Heart left ventricle (tissue), 16 donors: ENCODE measurements at regions of chr9 and their contacts with region 1.

Region 1: DNA sequence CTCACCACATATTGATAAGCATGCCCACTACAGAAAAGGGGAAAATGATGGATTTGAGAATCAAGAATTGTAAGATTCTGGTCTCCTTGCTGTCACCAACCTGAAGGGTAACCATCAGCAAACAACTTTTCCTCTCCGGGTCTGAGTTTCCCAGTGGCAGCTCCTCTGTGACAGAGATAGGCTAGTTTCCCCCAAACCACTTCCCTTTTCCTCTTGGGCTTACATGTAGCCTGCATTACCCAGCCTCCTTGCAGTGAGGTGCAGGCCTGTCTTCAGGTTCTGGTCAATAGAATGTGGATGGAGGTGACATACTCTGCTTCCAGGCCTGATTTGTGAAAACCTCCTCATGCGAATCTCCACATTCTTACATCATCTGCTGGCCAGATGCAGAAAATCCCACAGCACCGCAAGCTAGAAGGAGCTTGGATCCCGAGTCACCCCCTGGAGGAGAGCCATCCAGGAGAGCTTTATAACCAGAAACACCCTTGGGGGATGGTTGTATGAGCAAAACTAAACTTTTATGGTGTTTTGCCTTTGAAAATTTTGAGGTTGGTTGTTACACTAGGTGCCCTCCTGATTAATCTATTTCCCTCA is 206.1 kb downstream of the RGS3 start:
- DNase-seq: no peak
- ATAC-seq: no peak
- H3K4me3 ChIP-seq: no peak overlapping the region
- H3K27ac ChIP-seq: no peak overlapping the region
- H3K4me1 ChIP-seq: peaks cover 0 to 6% (median 0%) of the 10 kb centered on the region in 12 donors
- H3K27me3 ChIP-seq: no peaks in the 10 kb centered on the region
- CTCF ChIP-seq: no peak
- POLR2A ChIP-seq: no peak

Region 2: GRCh38 chr9:113299800-113300292 is 369.8 kb before region 1 on chr9:
- intact Hi-C with region 1: loop called in 1 of 10 experiments (anchors 10 kb)
- DNase-seq: peak in 1 of 5 donors; percentile 17
- ATAC-seq: peak in 3 of 4 donors; percentile 25 to 38 (median 32)
- H3K4me3 ChIP-seq: no peak overlapping the region
- H3K27ac ChIP-seq: no peak overlapping the region
- H3K4me1 ChIP-seq: peaks cover 0 to 9% (median 0%) of the 10 kb centered on the region in 12 donors
- H3K27me3 ChIP-seq: no peaks in the 10 kb centered on the region
- CTCF ChIP-seq: no peak
- POLR2A ChIP-seq: no peak

Region 3: GRCh38 chr9:113317777-113318176 is 351.8 kb before region 1 on chr9:
- intact Hi-C with region 1: loop called in 1 of 10 experiments (anchors 10 kb)
- DNase-seq: no peak
- ATAC-seq: no peak
- H3K4me3 ChIP-seq: no peak overlapping the region
- H3K27ac ChIP-seq: no peak overlapping the region
- H3K4me1 ChIP-seq: peaks cover 0 to 3% (median 0%) of the 10 kb centered on the region in 12 donors
- H3K27me3 ChIP-seq: no peaks in the 10 kb centered on the region
- CTCF ChIP-seq: peak in 3 of 12 donors; percentile 8 to 24 (median 13)
- POLR2A ChIP-seq: no peak

Region 4: GRCh38 chr9:113427629-113428028 is 242.0 kb before region 1 on chr9:
- intact Hi-C with region 1: loop called in 4 of 10 experiments (anchors 5 to 10 kb)
- DNase-seq: no peak
- ATAC-seq: no peak
- H3K4me3 ChIP-seq: no peak overlapping the region
- H3K27ac ChIP-seq: no peak overlapping the region
- H3K4me1 ChIP-seq: peaks cover 0 to 8% (median 0%) of the 10 kb centered on the region in 12 donors
- H3K27me3 ChIP-seq: no peaks in the 10 kb centered on the region
- CTCF ChIP-seq: no peak
- POLR2A ChIP-seq: no peak

Region 5: DNA sequence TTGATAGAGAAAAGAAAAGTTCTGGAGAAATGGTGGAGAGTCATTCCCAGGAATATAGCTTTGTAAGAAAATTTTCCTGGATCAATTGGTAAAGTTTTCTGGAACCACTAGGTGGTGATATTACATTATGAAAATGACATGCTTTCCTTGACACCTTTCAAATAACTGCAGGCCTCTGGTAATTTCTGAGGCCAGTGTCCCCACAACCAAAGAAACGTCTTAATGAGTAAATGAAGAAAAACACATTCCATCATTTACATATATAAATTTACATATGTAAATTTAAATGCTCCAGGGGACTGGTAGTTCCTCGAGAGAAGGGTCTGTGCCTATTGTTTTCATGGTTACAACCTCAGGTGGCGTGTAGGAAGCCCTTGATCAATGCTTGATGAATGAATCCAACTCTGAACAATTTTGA is 223.3 kb before region 1 on chr9:
- intact Hi-C with region 1: no loop called
- DNase-seq: no peak
- ATAC-seq: peak in 3 of 4 donors; percentile 42 to 70 (median 59)
- H3K4me3 ChIP-seq: no peak overlapping the region
- H3K27ac ChIP-seq: peak overlapping the region in 9 of 12 donors; percentile 6 to 67 (median 35)
- H3K4me1 ChIP-seq: peaks cover 0 to 19% (median 5%) of the 10 kb centered on the region in 12 donors
- H3K27me3 ChIP-seq: no peaks in the 10 kb centered on the region
- CTCF ChIP-seq: peak; percentile 53 to 82 (median 70)
- POLR2A ChIP-seq: no peak